ENCODE measurements at regions of chr3 and their contacts with region 1.

Region 1: GRCh38 chr3:71022551-71023335 is 560.8 kb downstream of the FOXP1 start:
- DNase-seq: peak; percentile 10
- ATAC-seq: no peak; the same call in 1 of the 2 replicates
- H3K4me3 ChIP-seq: no peak overlapping the region
- H3K27ac ChIP-seq: no peak overlapping the region
- H3K4me1 ChIP-seq: peaks cover 6% of the 10 kb centered on the region
- H3K27me3 ChIP-seq: no peaks in the 10 kb centered on the region
- CTCF ChIP-seq: peak; percentile 24; the same call in 1 of the 2 replicates
- POLR2A ChIP-seq: no peak
- RAD21 ChIP-seq: no peak

Region 2: DNA sequence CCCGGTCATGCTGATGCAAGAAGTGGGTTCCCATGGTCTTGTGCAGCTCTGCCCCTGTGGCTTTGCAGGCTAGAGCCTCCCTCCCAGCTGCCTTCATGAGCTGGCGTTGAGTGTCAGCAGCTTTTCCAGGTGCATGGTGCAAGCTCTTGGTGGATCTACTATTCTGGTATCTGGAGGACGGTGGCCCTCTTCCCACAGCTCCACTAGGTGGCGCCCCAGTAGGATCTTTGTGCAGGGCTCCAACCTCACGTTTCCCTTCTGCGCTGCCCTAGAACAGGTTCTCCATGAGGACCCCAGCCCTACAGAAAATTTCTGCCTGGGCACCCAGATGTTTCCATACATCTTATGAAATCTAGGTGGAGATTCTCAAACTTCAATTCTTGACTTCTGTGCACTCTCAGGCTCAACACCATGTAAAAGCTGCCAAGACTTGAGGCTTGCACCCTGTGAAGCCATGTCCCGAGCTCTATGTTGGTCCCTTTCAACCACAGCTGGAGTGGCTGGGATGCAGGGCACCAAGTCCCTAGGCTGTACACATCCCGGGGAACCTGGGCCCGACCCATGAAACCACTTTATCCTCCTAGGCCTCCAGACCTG is 471.9 kb before region 1 on chr3:
- CTCF ChIA-PET with region 1: no interaction called
- POLR2A ChIA-PET with region 1: no interaction called
- dilution Hi-C with region 1: no loop called
- in situ Hi-C with region 1: no loop called
- intact Hi-C with region 1: loop called (anchors 5 kb)
- DNase-seq: peak; percentile 54
- ATAC-seq: peak; percentile 93
- H3K4me3 ChIP-seq: no peak overlapping the region
- H3K27ac ChIP-seq: no peak overlapping the region
- H3K4me1 ChIP-seq: no peaks in the 10 kb centered on the region
- H3K27me3 ChIP-seq: peaks cover 5% of the 10 kb centered on the region; the same call in 1 of the 2 replicates
- CTCF ChIP-seq: peak; percentile 67
- POLR2A ChIP-seq: no peak
- RAD21 ChIP-seq: peak; percentile 79

Region 3: DNA sequence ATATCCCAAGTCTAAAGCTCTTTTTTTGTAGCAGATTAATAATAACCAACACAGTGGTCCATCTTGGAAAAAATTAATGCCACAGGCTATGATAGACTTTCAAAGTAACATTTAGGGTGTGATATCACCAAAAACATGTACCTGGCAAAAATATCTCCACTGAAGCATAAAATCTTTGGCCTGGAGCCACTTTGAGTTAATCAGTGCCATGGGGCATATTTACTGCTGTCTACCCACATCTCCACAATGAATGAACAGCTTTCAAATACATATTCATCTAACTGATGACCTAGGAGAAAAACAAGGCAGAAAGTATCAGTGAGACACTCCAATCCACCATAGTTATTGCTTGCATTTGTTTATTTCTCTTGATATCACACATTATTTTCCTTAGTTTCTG is 414.3 kb before region 1 on chr3:
- CTCF ChIA-PET with region 1: no interaction called
- POLR2A ChIA-PET with region 1: no interaction called
- dilution Hi-C with region 1: no loop called
- in situ Hi-C with region 1: no loop called
- intact Hi-C with region 1: no loop called
- DNase-seq: no peak
- ATAC-seq: no peak
- H3K4me3 ChIP-seq: no peak overlapping the region
- H3K27ac ChIP-seq: no peak overlapping the region
- H3K4me1 ChIP-seq: no peaks in the 10 kb centered on the region
- H3K27me3 ChIP-seq: peaks cover 3% of the 10 kb centered on the region
- CTCF ChIP-seq: no peak
- POLR2A ChIP-seq: no peak
- RAD21 ChIP-seq: no peak

Region 4: GRCh38 chr3:70989174-70989573 is 33.6 kb before region 1 on chr3:
- CTCF ChIA-PET with region 1: interaction called, 11 read pairs
- POLR2A ChIA-PET with region 1: no interaction called
- dilution Hi-C with region 1: no loop called
- in situ Hi-C with region 1: no loop called
- intact Hi-C with region 1: no loop called
- DNase-seq: peak; percentile 75
- ATAC-seq: peak; percentile 66
- H3K4me3 ChIP-seq: no peak overlapping the region
- H3K27ac ChIP-seq: peak overlapping the region; percentile 51; the same call in 1 of the 2 replicates
- H3K4me1 ChIP-seq: peaks cover 25% of the 10 kb centered on the region
- H3K27me3 ChIP-seq: no peaks in the 10 kb centered on the region
- CTCF ChIP-seq: no peak
- POLR2A ChIP-seq: no peak
- RAD21 ChIP-seq: no peak

Region 5: GRCh38 chr3:71673486-71673885 is 650.7 kb after region 1 on chr3:
- CTCF ChIA-PET with region 1: no interaction called
- POLR2A ChIA-PET with region 1: no interaction called
- dilution Hi-C with region 1: no loop called
- in situ Hi-C with region 1: no loop called
- intact Hi-C with region 1: no loop called
- DNase-seq: peak; percentile 55
- ATAC-seq: peak; percentile 42
- H3K4me3 ChIP-seq: no peak overlapping the region
- H3K27ac ChIP-seq: no peak overlapping the region
- H3K4me1 ChIP-seq: no peaks in the 10 kb centered on the region
- H3K27me3 ChIP-seq: no peaks in the 10 kb centered on the region
- CTCF ChIP-seq: no peak
- POLR2A ChIP-seq: no peak
- RAD21 ChIP-seq: no peak

Region 6: DNA sequence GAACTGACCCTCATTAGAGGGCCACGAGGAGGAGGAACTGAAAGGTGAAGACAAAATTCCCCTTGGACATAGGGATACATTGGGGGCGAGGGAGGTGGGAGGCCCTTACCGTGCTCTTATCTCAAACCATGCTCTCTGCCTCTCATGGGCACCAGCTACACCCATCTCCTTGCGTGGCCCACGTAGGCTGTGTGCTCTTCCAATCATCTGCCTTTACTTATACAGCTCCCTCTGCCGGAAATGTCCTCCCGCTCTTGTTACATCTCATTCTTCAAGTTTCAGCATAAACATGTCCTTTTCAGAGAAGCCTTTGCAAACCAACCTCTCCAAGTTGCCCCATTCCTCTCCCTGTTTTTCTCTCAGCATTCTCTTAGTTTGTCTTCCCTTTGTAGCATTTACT is 1070.0 kb after region 1 on chr3:
- CTCF ChIA-PET with region 1: no interaction called
- POLR2A ChIA-PET with region 1: no interaction called
- dilution Hi-C with region 1: no loop called
- in situ Hi-C with region 1: no loop called
- intact Hi-C with region 1: no loop called
- DNase-seq: no peak
- ATAC-seq: no peak
- H3K4me3 ChIP-seq: no peak overlapping the region
- H3K27ac ChIP-seq: no peak overlapping the region
- H3K4me1 ChIP-seq: no peaks in the 10 kb centered on the region
- H3K27me3 ChIP-seq: peaks cover 27% of the 10 kb centered on the region
- CTCF ChIP-seq: no peak
- POLR2A ChIP-seq: no peak
- RAD21 ChIP-seq: no peak

Measured in IMR-90 (cell line).